Activated CD4-positive, alpha-beta memory T cell treated with anti-CD3 and anti-CD28 coated beads, Interleukin-2, amount 10 ng/mL, durations not matched to agents 7 days and 5 days (primary cell): ENCODE measurements at regions of chr22 and their contacts with region 1.

Region 1: DNA sequence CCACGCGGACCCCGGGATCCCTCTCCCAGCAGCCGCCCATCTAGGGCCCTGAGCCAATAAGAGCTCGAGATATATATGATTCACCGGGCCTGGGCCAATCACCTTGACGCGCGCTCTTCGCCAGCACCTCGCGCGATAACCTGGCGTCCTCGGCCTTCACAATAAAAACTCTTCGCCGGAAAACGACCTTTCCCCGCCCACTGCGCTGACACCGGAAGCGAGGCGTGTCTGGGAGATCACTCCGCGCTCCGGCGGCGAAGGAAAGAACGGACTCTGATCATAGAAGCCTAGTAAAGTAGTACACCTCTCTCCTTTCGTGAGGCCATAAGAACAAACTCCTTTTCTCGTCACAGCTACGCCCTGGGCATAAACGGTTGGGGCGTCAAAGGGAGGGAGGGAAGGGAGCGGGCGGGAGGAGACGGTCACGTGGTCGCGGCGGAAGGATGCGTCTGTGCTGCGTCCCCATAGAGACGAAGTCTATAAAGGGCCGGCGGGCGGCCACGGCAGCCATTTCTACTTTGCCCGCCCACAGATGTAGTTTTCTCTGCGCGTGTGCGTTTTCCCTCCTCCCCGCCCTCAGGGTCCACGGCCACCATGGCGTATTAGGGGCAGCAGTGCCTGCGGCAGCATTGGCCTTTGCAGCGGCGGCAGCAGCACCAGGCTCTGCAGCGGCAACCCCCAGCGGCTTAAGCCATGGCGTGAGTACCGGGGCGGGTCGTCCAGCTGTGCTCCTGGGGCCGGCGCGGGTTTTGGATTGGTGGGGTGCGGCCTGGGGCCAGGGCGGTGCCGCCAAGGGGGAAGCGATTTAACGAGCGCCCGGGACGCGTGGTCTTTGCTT is at the start of gene ATF4:
- DNase-seq: peak; percentile 97
- H3K4me3 Mint-ChIP-seq: peak within 1 kb of the TSS; percentile 94
- H3K27ac Mint-ChIP-seq: peak within 1 kb of the TSS; percentile 99
- H3K4me1 Mint-ChIP-seq: peaks cover 58% of the 10 kb centered on the region
- H3K27me3 Mint-ChIP-seq: peaks cover 2% of the 10 kb centered on the region
- total RNA-seq, gene ATF4: 456 to 460 TPM

Region 2: GRCh38 chr22:39277155-39277607 is 243.1 kb before region 1 on chr22:
- CTCF ChIA-PET with region 1: no interaction called
- POLR2A ChIA-PET with region 1: no interaction called
- DNase-seq: no peak
- H3K4me3 Mint-ChIP-seq: no peak overlapping the region
- H3K27ac Mint-ChIP-seq: no peak overlapping the region
- H3K4me1 Mint-ChIP-seq: no peaks in the 10 kb centered on the region
- H3K27me3 Mint-ChIP-seq: peaks cover 21% of the 10 kb centered on the region

Region 3: GRCh38 chr22:39490135-39490798 is 30.0 kb before region 1 on chr22:
- CTCF ChIA-PET with region 1: interaction called, 21 read pairs
- POLR2A ChIA-PET with region 1: interaction called, 42 read pairs
- DNase-seq: peak; percentile 82
- H3K4me3 Mint-ChIP-seq: no peak overlapping the region
- H3K27ac Mint-ChIP-seq: no peak overlapping the region
- H3K4me1 Mint-ChIP-seq: peaks cover 14% of the 10 kb centered on the region
- H3K27me3 Mint-ChIP-seq: peaks cover 2% of the 10 kb centered on the region

Region 4: DNA sequence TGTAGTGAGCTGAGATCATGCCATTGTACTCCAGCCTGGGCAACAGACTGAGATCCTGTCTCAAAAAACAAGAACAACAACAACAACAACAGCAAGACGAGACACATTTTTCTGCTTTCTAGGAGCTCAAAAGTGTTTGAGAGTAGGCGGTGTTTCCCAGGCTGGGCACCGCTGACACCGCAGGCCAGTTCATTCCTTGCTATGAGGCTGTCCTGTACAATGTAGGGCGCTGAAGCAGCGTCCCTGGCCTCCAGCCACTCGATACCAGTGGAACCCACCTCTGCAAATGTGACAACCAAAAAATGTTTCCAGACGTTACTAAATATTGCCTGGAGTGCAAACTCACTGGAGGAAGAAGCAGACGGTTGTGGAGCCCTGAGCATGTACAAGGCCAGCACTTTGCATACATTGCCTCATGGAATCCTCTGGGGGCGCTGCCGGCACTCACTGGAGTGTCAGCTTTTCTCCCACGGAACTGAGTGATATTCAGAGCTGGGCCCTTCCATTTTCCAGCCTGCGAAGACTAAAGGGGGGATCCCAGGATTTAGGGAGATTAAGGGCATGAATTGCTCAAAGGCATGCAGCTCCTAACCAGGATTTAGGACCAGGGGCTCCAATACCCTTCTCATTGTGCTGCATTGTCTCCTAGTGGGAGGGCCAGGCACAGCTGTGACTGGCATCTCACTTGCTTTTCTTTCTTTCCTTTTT is 24.0 kb before region 1 on chr22:
- CTCF ChIA-PET with region 1: interaction called, 21 read pairs
- POLR2A ChIA-PET with region 1: interaction called, 124 read pairs
- DNase-seq: peak; percentile 63
- H3K4me3 Mint-ChIP-seq: no peak overlapping the region
- H3K27ac Mint-ChIP-seq: no peak overlapping the region
- H3K4me1 Mint-ChIP-seq: peaks cover 8% of the 10 kb centered on the region
- H3K27me3 Mint-ChIP-seq: peaks cover 12% of the 10 kb centered on the region

Region 5: GRCh38 chr22:39502109-39502788 is 18.0 kb before region 1 on chr22 and contains the start of gene MIEF1:
- CTCF ChIA-PET with region 1: interaction called, 14 read pairs
- POLR2A ChIA-PET with region 1: interaction called, 124 read pairs
- DNase-seq: peak; percentile 94
- H3K4me3 Mint-ChIP-seq: peak within 1 kb of the TSS; percentile 91
- H3K27ac Mint-ChIP-seq: peak within 1 kb of the TSS; percentile 92
- H3K4me1 Mint-ChIP-seq: peaks cover 41% of the 10 kb centered on the region
- H3K27me3 Mint-ChIP-seq: peaks cover 10% of the 10 kb centered on the region
- total RNA-seq, gene MIEF1: 32.4 to 32.6 TPM

Region 6: GRCh38 chr22:39508393-39508792 is 11.9 kb before region 1 on chr22:
- CTCF ChIA-PET with region 1: interaction called, 14 read pairs
- POLR2A ChIA-PET with region 1: interaction called, 124 read pairs
- DNase-seq: no peak
- H3K4me3 Mint-ChIP-seq: no peak overlapping the region
- H3K27ac Mint-ChIP-seq: peak overlapping the region; percentile 55
- H3K4me1 Mint-ChIP-seq: peaks cover 40% of the 10 kb centered on the region
- H3K27me3 Mint-ChIP-seq: no peaks in the 10 kb centered on the region

Region 7: DNA sequence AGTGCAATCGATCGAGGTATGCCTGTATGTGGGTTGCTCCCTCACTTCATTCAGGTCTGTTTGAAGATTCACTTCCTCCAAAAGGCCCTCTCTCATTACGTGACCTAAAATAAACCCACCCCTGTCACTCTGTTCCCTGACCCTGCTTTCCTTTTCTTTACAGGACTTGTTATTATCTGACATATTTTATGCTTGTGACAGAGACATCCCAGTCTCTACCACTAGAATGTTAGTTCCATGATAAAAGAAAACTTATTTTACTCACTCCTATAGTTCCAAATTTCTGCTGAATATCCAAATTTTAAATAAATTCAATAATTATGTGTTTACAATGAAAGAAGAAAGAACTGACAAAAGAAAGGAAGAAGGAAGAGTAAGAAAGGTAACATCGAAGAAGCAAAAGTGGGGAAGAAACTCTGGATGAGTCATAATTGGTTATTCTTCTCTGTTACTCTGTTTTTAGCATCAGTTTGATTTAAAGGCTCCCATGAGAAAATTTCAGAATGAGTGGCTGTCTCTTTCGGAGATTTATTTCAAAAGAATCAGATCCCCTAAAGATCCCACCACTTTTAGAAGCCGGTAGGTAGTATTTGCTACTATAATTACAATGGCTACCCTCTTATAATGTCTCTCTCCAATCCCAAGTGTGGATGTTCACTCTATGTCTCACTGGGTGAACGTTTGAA is 339.8 kb after region 1 on chr22:
- CTCF ChIA-PET with region 1: no interaction called
- POLR2A ChIA-PET with region 1: no interaction called
- DNase-seq: no peak
- H3K4me3 Mint-ChIP-seq: no peak overlapping the region
- H3K27ac Mint-ChIP-seq: peak overlapping the region; percentile 20
- H3K4me1 Mint-ChIP-seq: peaks cover 12% of the 10 kb centered on the region
- H3K27me3 Mint-ChIP-seq: peaks cover 13% of the 10 kb centered on the region